ENCODE measurements at regions of chr3 and their contacts with region 1.

Region 1: DNA sequence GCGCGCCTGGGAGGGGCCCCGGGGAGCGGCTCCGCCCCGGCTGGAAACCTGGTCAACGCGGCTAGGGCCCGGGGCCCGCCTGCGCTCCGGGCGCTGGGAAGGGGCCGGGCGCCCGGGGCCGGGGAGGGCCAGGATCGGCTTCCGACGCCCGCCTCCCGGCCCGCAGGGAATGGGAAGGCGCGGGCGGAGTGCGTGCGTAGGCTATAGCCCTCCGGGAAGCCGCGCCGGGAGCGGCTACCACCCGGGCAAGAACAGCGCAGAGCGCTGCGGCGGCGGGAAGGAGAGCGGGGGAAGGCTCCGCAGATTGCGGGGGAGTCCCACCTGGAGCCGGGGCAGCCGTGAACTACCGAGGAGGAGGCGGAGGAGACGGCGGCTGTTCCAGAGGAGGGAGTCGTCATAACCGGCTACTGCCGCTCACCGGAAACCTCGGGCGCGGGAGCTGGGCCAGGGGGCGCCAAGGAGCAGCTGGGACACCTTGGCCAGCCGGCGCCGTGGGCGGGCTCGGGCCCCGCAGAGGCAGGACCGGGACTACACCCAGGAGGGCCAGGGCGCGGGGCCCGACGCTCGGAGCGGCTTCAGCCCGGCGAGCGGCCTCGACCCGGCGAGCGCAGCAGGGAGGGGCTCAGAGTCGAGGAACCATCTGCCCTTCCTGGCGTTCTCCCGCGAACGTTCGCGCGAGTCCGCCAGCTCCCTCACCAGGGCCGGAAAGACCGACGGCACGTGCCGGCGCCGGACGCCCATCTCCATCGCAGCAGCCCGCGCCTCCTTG is at the start of gene EOGT:
- DNase-seq: peak; percentile 92 to 97
- ATAC-seq: peak; percentile 91
- H3K4me3 ChIP-seq: peak within 1 kb of the TSS; percentile 81 to 86
- H3K27ac ChIP-seq: peak within 1 kb of the TSS; percentile 100
- H3K4me1 ChIP-seq: peaks cover 6 to 7% of the 10 kb centered on the region in 2 donors
- H3K27me3 ChIP-seq: no peaks in the 10 kb centered on the region
- total RNA-seq, gene EOGT: 104 to 134 TPM

Region 2: DNA sequence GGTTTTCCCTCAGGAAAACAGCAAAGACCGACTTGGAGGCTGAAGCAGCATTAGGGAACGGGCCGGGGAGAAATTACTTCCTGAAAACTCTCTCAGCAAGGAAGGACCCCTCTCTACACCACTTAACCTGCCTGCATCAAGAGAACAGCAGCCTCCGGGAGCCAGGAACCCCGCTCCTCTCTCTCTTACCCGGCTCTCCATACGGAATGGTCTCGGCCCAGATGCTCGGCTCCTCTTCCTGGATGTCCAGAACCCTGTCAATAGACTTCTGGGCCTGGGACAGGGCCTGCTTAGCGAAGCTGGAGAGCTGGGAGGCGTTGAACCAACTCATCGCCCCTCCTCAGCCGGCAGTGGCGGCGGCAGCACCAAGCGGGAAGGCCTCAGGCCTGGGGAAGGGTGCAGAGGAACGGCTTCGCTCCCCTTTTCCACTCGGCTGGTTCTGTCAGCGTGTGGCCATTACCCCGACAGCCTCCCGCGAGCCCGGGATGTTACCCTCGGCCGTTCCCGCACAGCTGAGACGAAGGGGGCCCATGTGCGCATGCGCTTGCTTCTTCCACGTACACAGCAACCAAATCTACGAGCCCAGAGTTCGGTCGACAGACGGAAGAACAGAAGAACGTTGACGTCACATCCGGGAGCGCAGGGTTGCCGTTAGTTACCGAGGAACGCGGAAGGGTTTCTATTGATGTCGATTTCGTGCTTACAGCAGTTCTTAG is 38.5 kb after region 1 on chr3 and contains the start of gene TMF1:
- intact Hi-C with region 1: loop called in 1 of 2 experiments (anchors 2 kb)
- DNase-seq: peak; percentile 99 to 100
- ATAC-seq: peak; percentile 99
- H3K4me3 ChIP-seq: peak within 1 kb of the TSS; percentile 69 to 76
- H3K27ac ChIP-seq: peak within 1 kb of the TSS; percentile 10 to 88
- H3K4me1 ChIP-seq: peaks cover 2 to 5% of the 10 kb centered on the region in 2 donors
- H3K27me3 ChIP-seq: no peaks in the 10 kb centered on the region
- total RNA-seq, gene TMF1: 45.6 to 52.8 TPM